ENCODE measurements at regions of chr2 and their contacts with region 1.

Region 1: GRCh38 chr2:24228470-24228869 is 53.6 kb downstream of the FAM228A start:
- DNase-seq: no peak

Region 2: GRCh38 chr2:24382363-24383073 is 154.0 kb after region 1 on chr2:
- intact Hi-C with region 1: loop called (anchors 2 kb)
- DNase-seq: peak in 6 of 10 donors; percentile 37 to 92 (median 57)

Measured in posterior cingulate gyrus (tissue), 11 donors.